HEK293T (cell line): ENCODE measurements at regions of chr3 and their contacts with region 1.

Region 1: DNA sequence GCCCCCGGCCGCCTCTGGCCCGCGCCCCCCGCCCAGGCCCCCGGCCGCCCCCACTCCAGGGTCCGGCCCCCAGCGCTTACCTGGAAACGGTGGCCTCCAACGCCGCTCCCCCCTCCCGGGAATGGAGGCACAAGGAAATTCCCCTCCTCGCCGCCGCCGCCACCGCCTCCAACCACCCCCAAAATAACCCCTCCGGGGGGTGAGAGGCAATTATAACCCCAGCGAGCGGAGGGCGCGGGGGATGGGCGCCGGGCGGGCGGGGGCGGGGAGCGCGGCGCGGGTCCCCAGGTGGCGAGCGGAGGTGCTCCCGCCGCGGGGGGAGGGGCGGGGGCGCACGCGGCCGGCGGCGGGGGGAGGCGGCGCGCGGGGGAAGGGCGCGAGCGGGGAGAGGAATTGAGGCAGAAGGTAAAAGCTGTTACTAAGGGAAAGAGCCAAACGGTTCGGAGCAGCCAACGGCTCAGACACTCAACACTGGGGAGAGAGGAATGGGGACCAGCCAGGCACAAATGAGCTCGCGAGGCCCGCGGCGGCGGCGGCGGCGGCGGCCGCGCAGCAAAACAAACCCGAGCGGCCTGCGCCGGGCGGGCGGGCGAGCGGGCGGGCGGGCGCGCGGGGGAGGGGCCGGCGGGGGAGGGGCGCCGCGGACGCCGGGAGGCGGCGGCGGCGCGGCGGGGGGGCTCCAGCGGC is at the start of gene TBL1XR1:
- DNase-seq: peak; percentile 85

Region 2: DNA sequence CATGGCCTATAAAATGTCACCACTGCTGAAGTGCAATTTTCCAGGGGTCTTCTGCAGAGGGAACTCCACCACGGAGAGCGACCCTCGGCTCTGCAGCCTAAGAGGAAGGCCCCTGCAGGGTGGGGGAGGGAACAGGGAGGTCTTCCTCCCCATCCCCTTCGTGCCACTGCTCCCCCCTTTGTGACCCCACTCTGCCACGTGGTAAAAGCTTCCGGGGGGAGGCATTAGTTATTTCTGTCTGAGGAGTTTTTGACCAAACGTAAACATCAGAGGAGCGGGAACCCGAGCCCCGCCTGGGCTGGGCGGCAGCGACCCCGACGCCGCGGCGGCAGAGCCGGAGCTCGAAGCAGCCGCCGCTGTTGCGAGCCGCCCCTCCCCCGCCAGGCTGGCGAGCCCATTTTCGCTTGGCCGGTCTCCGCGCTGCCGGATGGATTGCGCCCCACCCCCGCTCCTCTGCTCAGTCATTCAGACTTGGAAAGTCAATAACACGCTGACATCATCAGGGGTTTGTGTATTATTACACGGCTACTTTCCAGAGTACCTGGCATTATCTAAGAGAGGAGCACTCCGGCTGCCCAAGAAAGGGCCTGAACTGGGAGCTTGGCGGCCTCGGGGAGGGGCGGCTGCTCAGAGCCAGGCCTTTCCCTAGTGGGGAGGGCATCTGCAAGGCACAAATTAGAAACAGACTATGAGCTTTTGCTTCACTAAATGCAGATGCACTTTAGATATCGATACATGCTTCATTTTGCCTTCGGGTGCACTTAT is 162.6 kb after region 1 on chr3:
- CTCF ChIA-PET with region 1: no interaction called
- POLR2A ChIA-PET with region 1: interaction called, 23 read pairs
- DNase-seq: peak; percentile 88